Naive thymus-derived CD4-positive, alpha-beta T cell (primary cell): ENCODE measurements at regions of chr5 and their contacts with region 1.

Region 1: GRCh38 chr5:153974131-153974812 is 64.4 kb downstream of the FAM114A2 start:
- DNase-seq: peak in 5 of 9 donors; percentile 29 to 49 (median 33)
- ATAC-seq: peak; percentile 47
- H3K4me3 ChIP-seq: no peak overlapping the region
- H3K4me3 Mint-ChIP-seq: no peak overlapping the region
- H3K27ac ChIP-seq: no peak overlapping the region
- H3K27ac Mint-ChIP-seq: no peak overlapping the region
- H3K4me1 ChIP-seq: no peaks in the 10 kb centered on the region
- H3K4me1 Mint-ChIP-seq: no peaks in the 10 kb centered on the region
- H3K27me3 ChIP-seq: no peaks in the 10 kb centered on the region
- H3K27me3 Mint-ChIP-seq: peaks cover 3 to 21% (median 11%) of the 10 kb centered on the region in 5 donors

Region 2: DNA sequence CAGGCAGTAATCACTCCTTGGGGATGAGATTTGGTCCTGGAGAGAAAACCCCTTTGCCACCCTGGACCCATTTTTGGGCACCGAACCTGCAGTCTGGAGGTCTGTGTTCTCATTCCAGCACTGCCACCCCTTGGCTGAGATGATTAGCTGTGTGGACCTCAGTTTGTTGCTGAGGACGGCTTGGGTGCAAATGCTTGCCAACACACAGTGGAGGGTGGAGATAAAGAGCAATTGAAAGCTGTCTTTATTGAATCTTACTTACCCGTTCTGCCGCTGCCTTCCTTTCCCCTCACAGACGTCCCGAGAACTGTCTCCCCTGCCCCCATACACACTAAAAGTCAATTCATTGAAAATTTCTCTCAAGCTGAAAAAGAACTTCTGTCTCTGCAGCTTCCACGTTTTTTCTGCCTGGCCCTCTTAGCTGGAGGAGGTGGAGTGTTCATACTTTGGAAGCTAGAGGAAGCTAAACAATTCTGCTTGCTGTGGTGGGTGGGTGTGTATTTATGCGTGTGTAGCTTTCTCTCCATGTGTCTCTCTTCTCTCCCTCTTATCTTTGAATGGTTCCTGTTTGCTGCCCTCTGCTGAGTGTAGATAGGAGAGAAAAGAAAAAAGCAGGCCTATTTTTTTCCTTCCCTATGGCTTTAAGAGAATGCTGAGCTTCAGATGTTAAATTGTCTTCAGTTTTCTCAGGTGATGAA is 222.8 kb after region 1 on chr5:
- CTCF ChIA-PET with region 1: no interaction called
- POLR2A ChIA-PET with region 1: no interaction called
- intact Hi-C with region 1: loop called in 1 of 2 experiments (anchors 5 kb)
- DNase-seq: peak in 2 of 9 donors; percentile 19 to 27
- ATAC-seq: peak; percentile 65
- H3K4me3 ChIP-seq: no peak overlapping the region
- H3K4me3 Mint-ChIP-seq: peak overlapping the region; percentile 1 to 84 (median 58)
- H3K27ac ChIP-seq: peak overlapping the region; percentile 0
- H3K27ac Mint-ChIP-seq: peak overlapping the region; percentile 27 to 97 (median 76)
- H3K4me1 ChIP-seq: peaks cover 28 to 29% of the 10 kb centered on the region in 2 donors
- H3K4me1 Mint-ChIP-seq: peaks cover 43 to 78% (median 49%) of the 10 kb centered on the region in 7 donors
- H3K27me3 ChIP-seq: no peaks in the 10 kb centered on the region
- H3K27me3 Mint-ChIP-seq: no peaks in the 10 kb centered on the region

Region 3: DNA sequence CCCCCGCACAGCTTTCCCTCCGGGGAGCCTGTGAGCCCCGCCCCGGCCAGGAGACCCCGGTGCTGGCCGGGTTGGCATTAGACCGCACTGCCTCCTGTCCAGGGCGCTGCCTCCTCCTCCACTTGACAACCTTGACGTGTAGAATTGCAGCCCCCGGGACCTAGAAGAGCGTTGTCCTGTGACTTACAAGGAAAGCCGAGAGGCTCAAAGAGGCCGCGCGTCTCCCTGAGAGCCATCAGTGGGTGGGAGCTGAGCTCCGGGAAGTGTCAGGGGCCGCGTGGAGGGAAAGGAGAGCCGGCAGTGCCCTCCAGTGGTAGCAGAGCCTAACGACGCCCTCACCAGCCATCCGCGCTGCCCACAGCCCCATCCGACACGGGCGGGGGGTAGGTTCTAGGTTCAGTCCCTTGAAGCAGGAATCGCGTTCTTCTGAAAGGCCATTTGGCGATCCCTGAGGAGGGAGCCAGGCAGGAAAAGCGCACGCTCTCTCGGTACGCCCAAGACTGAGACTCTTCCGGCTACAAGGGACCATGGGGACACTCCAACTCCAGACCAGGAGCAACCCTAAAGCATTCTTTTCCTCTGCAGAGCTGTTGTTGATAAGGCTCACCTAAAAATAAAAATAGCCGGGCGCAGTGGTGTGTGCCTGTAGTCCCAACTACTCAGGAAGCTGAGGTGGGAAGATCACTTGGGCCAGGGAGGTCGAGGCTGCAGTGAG is 431.0 kb after region 1 on chr5:
- CTCF ChIA-PET with region 1: interaction called, 12 read pairs
- POLR2A ChIA-PET with region 1: no interaction called
- intact Hi-C with region 1: loop called in 1 of 2 experiments (anchors 1 kb)
- DNase-seq: peak; percentile 31 to 75 (median 61)
- ATAC-seq: peak; percentile 96
- H3K4me3 ChIP-seq: peak overlapping the region; percentile 33
- H3K4me3 Mint-ChIP-seq: peak overlapping the region; percentile 35 to 80 (median 65)
- H3K27ac ChIP-seq: no peak overlapping the region
- H3K27ac Mint-ChIP-seq: peak overlapping the region in 3 of 9 donors; percentile 18 to 73 (median 32)
- H3K4me1 ChIP-seq: peaks cover 4 to 8% of the 10 kb centered on the region in 2 donors
- H3K4me1 Mint-ChIP-seq: peaks cover 0 to 15% (median 10%) of the 10 kb centered on the region in 7 donors
- H3K27me3 ChIP-seq: no peaks in the 10 kb centered on the region
- H3K27me3 Mint-ChIP-seq: no peaks in the 10 kb centered on the region

Region 4: DNA sequence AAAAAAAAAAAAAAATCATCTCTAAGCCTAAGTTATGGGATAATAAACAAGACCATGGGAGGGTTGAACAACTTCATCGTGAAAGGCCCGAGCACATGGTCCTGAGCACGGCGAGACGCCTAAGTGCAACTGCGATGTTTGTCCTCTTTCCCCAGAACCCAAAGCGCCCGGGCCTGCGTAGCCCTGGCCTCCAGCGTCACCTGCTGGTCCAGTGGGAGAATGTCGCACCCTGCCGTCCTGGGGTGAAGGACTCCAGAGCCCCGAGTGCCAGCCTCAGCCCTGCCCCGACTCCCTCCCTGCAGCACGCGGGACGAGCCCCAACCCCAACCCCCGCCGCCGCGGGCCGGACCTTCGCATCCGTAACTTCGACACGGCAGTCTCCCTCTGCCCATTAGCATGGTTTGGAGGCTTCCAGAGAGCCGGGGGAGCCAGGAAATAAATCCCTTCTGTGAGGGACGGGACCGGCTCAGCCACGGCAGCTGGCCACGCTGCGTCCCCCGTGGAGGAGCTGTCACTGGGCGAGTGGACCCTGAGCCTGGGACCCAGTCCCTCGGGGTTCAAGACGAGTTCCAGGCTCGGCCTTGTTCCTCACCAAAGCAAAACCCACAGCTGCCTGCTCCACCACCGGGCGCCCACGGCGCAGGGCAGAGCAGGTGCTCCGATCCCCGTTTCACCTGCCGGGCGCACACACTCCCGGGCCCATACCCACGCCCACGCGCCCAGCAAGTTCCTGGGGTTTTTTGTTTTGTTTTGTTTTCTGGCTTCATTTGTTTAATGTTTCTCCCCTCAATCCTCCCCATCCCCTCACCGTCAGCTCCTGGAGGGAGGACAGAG is 636.3 kb after region 1 on chr5:
- CTCF ChIA-PET with region 1: no interaction called
- POLR2A ChIA-PET with region 1: no interaction called
- intact Hi-C with region 1: loop called in 1 of 2 experiments (anchors 1 kb)
- DNase-seq: peak in 7 of 9 donors; percentile 8 to 73 (median 21)
- ATAC-seq: peak; percentile 76
- H3K4me3 ChIP-seq: no peak overlapping the region
- H3K4me3 Mint-ChIP-seq: peak overlapping the region in 7 of 10 donors; percentile 35 to 71 (median 65)
- H3K27ac ChIP-seq: no peak overlapping the region
- H3K27ac Mint-ChIP-seq: no peak overlapping the region
- H3K4me1 ChIP-seq: no peaks in the 10 kb centered on the region
- H3K4me1 Mint-ChIP-seq: peaks cover 0 to 18% (median 14%) of the 10 kb centered on the region in 7 donors
- H3K27me3 ChIP-seq: no peaks in the 10 kb centered on the region
- H3K27me3 Mint-ChIP-seq: peaks cover 34 to 70% (median 66%) of the 10 kb centered on the region in 5 donors